Caco-2 (cell line): ENCODE measurements at regions of chr2 and their contacts with region 1.

Region 1: DNA sequence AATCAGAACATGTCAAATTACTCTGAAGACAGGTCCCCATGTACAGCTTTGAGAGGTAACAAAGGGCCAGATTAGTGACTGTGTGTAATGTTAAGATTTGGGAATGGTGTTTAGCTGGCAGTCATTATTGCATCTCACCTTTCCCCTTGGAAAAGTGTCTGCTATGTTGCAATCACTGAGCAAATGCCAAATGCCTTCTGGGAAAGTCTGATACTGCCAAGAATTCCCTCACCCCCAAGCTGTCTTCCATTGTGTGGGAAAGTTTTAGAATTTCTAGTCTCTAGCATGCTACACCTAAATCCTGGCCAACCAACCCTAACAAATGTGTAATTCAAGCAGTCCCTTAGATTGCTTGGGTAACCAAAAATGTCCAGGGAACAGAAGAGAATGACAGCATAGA is 13.6 kb upstream of the PELI1 start:
- DNase-seq: peak in 1 of 2 experiments; percentile 16
- H3K4me3 ChIP-seq: no peak overlapping the region
- H3K4me3 Mint-ChIP-seq: no peak overlapping the region
- H3K27ac Mint-ChIP-seq: no peak overlapping the region
- H3K4me1 ChIP-seq: peaks cover 17% of the 10 kb centered on the region
- H3K4me1 Mint-ChIP-seq: peaks cover 25% of the 10 kb centered on the region
- H3K27me3 ChIP-seq: no peaks in the 10 kb centered on the region
- H3K27me3 Mint-ChIP-seq: no peaks in the 10 kb centered on the region
- CTCF ChIP-seq: no peak

Region 2: GRCh38 chr2:64177315-64177714 is 19.5 kb after region 1 on chr2:
- CTCF ChIA-PET with region 1: no interaction called
- POLR2A ChIA-PET with region 1: no interaction called
- intact Hi-C with region 1: loop called (anchors 1 kb)
- DNase-seq: peak; percentile 63 to 72
- H3K4me3 ChIP-seq: no peak overlapping the region
- H3K4me3 Mint-ChIP-seq: peak overlapping the region; percentile 12
- H3K27ac Mint-ChIP-seq: no peak overlapping the region
- H3K4me1 ChIP-seq: peaks cover 50% of the 10 kb centered on the region
- H3K4me1 Mint-ChIP-seq: peaks cover 60% of the 10 kb centered on the region
- H3K27me3 ChIP-seq: no peaks in the 10 kb centered on the region
- H3K27me3 Mint-ChIP-seq: no peaks in the 10 kb centered on the region
- CTCF ChIP-seq: no peak

Region 3: DNA sequence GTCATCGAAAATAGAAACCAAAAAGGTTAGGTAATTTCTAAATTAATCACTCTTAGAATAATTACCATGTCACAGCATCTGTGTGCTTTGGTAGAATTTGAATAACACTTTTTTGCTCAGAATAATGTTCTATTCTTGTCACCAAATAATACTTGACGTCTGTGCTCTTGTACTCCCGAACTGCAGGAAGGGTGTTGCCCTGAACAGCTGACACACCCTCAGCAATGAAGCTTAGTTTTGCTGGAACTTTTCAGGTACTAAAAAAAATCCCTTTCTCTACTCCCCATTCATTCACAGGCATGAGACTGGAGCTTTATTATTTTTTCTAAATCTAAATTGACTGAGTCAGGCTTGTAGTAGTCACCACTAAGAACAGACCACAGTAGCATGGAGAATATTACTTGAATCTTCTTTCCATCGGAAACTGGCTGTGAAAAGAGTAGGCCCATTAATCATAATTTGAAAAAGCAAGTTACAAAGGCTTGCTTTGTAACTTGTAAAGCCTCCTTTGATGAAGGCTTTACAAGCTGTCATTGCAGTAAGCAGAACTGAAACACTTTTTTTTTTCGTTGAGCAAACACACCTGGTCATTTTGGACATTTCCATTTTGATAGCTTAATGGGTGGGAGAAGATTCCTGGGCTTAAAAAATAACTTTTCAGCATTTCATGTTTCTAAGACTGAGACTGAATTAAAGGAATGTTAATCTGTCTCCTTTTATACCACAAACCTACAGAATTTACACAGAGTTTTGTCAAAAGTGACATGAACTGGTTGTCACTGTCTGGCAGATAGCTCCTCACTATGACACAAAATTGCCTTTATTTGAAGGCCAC is 56.7 kb after region 1 on chr2:
- CTCF ChIA-PET with region 1: no interaction called
- POLR2A ChIA-PET with region 1: no interaction called
- intact Hi-C with region 1: loop called (anchors 1 kb)
- DNase-seq: peak in 1 of 2 experiments; percentile 69
- H3K4me3 ChIP-seq: no peak overlapping the region
- H3K4me3 Mint-ChIP-seq: peak overlapping the region; percentile 28
- H3K27ac Mint-ChIP-seq: peak overlapping the region; percentile 37
- H3K4me1 ChIP-seq: peaks cover 26% of the 10 kb centered on the region
- H3K4me1 Mint-ChIP-seq: peaks cover 21% of the 10 kb centered on the region
- H3K27me3 ChIP-seq: no peaks in the 10 kb centered on the region
- H3K27me3 Mint-ChIP-seq: no peaks in the 10 kb centered on the region
- CTCF ChIP-seq: no peak

Region 4: DNA sequence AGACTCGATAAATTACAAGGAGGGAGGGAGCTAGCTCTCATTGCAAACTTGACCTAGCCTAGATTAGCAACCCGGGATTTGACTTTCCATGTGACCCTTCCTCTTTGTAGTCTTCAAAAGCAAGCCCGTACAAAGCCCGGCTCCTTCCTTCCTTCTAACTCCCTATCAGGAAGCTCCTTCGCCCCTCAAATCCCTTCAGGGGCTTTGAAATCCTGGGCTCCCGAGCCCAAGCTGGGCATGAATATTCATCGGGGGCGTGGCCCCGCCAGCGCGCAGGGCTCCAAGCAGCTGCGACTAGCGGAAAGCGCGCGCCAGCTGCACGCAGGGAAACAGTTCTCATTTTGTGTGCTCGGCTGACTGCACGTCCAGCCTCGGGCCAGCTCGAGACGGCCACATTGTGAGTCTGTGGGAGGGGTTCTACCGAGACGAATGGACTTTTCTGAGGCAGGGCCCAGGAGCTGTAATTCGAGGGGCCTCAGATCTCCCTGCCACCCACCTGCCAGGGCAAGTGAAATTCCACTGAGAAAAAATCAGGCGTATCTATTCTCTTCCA is 70.4 kb after region 1 on chr2:
- CTCF ChIA-PET with region 1: no interaction called
- POLR2A ChIA-PET with region 1: no interaction called
- intact Hi-C with region 1: loop called (anchors 5 kb)
- DNase-seq: peak; percentile 79 to 80
- H3K4me3 ChIP-seq: peak overlapping the region; percentile 45
- H3K4me3 Mint-ChIP-seq: peak overlapping the region; percentile 89
- H3K27ac Mint-ChIP-seq: peak overlapping the region; percentile 73
- H3K4me1 ChIP-seq: 0 out of 2 replicates have a peak, but pooled peaks cover 5% of the 10 kb centered on the region
- H3K4me1 Mint-ChIP-seq: peaks cover 14% of the 10 kb centered on the region
- H3K27me3 ChIP-seq: no peaks in the 10 kb centered on the region
- H3K27me3 Mint-ChIP-seq: no peaks in the 10 kb centered on the region
- CTCF ChIP-seq: no peak

Region 5: DNA sequence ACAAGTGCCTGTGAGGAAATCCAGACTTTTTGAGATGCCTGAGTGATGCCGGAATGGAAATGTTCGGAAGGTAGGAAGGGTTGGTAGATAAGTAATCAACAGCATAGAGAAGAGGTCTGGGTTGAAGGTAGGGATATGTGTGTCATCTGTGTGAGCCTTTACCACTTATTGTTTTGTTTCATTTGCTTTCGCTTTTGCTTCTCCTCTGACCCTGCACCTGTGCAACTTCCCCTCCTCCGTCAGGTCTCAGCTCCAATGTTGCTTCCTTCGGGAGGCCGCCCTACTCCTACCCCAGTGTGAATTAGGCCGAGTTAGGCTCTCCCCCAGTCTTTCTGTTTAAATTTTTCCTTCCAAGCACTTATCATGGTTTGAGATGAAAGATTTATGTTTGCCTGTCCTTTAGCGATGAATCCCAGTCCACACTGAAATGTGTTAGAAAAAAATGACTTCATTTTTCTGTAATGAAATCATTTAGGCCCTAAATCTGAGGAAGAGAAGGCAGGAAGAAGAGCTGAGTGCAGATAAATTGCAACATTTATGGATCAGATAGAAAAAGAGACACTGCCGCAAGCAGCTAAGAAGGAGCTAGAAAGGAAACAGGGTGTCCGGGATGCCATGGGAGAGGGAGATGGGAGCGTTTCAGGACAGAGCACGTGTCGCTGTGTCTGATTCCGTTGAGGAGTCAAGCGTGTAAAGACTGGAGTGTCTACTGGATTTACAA is 126.0 kb after region 1 on chr2:
- CTCF ChIA-PET with region 1: no interaction called
- POLR2A ChIA-PET with region 1: no interaction called
- intact Hi-C with region 1: no loop called
- DNase-seq: no peak
- H3K4me3 ChIP-seq: no peak overlapping the region
- H3K4me3 Mint-ChIP-seq: no peak overlapping the region
- H3K27ac Mint-ChIP-seq: no peak overlapping the region
- H3K4me1 ChIP-seq: no peaks in the 10 kb centered on the region
- H3K4me1 Mint-ChIP-seq: no peaks in the 10 kb centered on the region
- H3K27me3 ChIP-seq: no peaks in the 10 kb centered on the region
- H3K27me3 Mint-ChIP-seq: no peaks in the 10 kb centered on the region
- CTCF ChIP-seq: no peak

Region 6: DNA sequence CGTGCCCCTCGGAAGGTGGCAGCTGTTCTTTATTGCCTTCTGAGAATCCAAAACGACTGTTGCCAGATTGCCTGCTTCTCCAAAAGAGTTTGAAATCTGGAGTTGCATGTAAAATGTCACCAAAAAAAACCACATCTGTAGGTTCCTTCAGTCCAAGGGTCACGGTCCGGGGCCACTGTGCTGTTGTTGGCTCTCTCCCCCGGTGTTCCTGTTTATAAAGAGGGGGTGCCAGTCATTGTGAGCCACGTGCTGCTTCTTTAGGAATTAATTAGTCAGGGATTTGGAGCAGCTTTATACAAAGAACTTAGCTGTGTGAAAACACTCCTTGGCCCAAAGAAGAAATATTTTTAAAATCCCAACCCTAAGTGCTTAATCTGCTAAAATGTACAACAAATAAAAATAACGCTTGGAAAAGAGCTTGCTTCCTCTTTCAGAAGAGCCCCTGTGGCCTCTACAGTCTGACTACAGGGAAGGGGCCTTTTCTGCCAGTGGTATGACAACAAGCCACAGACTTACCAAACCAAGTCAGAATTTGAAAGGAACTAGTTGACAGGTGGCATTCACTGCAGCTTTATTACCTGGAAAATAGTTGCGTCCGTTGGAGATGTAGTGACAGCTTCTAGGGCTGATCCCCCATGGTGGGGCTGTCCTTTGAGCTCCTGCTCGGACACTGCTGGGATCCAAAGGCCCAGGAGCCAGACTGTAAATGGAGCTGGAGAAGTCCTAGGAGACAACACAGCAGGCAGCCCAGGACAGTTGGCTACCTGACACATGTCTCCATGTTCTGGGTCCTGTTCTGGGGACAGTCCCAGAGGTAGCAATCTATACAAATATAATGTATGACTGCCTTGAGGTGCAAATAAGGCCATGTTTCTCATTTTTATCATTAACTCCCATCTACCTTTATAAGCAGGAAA is 746.9 kb after region 1 on chr2:
- CTCF ChIA-PET with region 1: no interaction called
- POLR2A ChIA-PET with region 1: no interaction called
- intact Hi-C with region 1: no loop called
- DNase-seq: no peak
- H3K4me3 ChIP-seq: no peak overlapping the region
- H3K4me3 Mint-ChIP-seq: no peak overlapping the region
- H3K27ac Mint-ChIP-seq: no peak overlapping the region
- H3K4me1 ChIP-seq: no peaks in the 10 kb centered on the region
- H3K4me1 Mint-ChIP-seq: no peaks in the 10 kb centered on the region
- H3K27me3 ChIP-seq: no peaks in the 10 kb centered on the region
- H3K27me3 Mint-ChIP-seq: peaks cover 2% of the 10 kb centered on the region
- CTCF ChIP-seq: no peak